B cell (primary cell): ENCODE measurements at regions of chr10 and their contacts with region 1.

Region 1: GRCh38 chr10:60878224-60878623 is 65.8 kb downstream of the RHOBTB1 start:
- DNase-seq: no peak
- ATAC-seq: no peak
- H3K4me3 ChIP-seq: no peak overlapping the region
- H3K4me3 Mint-ChIP-seq: no peak overlapping the region
- H3K27ac ChIP-seq: no peak overlapping the region
- H3K27ac Mint-ChIP-seq: no peak overlapping the region
- H3K4me1 ChIP-seq: no peaks in the 10 kb centered on the region
- H3K4me1 Mint-ChIP-seq: no peaks in the 10 kb centered on the region
- H3K27me3 ChIP-seq: no peaks in the 10 kb centered on the region
- H3K27me3 Mint-ChIP-seq: peaks cover 3% of the 10 kb centered on the region
- CTCF ChIP-seq: no peak

Region 2: DNA sequence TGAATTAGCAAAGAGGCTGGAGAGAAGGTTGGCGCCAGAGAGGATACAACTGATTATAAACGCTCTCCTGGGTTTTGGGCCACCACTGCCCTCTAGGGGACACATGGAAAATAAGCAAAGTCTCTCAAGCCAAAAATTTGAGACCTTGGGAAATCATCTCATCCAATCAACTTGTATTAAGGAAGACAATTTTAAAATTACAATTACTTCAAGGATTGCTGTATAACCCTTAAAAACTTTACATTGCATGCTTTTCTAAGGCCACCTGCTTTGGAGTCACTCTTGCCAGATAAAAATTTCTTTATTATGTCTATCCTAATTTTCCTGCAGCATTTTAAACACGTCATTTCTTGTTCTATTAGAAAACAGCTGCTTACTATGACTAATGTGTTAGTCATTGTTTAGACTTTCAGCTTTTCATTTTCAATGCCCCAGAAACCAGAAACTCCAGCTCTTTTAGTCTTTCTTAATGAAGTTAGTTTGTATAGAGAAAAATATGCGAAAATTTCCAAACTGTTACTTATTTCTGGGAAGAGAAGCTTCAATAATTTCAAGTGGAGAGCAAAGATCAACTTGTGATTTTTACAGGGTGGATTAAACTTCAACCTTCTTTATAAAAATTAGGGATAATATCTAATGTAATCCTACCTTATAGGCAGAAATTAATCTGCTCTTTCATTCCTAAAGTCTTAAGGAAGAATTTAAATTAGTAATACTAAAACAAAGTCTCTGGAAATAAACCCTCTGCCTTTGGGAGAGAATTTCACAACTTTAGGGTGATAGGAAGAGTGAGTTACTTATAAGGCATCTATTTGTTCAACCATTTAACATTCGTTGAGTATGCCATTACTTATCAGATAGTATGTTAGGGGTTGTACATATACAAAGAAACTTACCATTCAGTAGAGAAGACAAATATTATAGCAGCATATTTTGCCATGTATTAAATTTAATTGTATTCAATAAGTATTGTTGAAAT is 86.3 kb after region 1 on chr10:
- CTCF ChIA-PET with region 1: interaction called, 3 read pairs
- POLR2A ChIA-PET with region 1: no interaction called
- intact Hi-C with region 1: loop called (anchors 5 kb)
- DNase-seq: peak; percentile 67
- ATAC-seq: peak; percentile 58
- H3K4me3 ChIP-seq: no peak overlapping the region
- H3K4me3 Mint-ChIP-seq: no peak overlapping the region
- H3K27ac ChIP-seq: no peak overlapping the region
- H3K27ac Mint-ChIP-seq: no peak overlapping the region
- H3K4me1 ChIP-seq: peaks cover 12 to 13% of the 10 kb centered on the region in 2 donors
- H3K4me1 Mint-ChIP-seq: peaks cover 20% of the 10 kb centered on the region
- H3K27me3 ChIP-seq: no peaks in the 10 kb centered on the region
- H3K27me3 Mint-ChIP-seq: peaks cover 5% of the 10 kb centered on the region
- CTCF ChIP-seq: peak; percentile 93

Region 3: DNA sequence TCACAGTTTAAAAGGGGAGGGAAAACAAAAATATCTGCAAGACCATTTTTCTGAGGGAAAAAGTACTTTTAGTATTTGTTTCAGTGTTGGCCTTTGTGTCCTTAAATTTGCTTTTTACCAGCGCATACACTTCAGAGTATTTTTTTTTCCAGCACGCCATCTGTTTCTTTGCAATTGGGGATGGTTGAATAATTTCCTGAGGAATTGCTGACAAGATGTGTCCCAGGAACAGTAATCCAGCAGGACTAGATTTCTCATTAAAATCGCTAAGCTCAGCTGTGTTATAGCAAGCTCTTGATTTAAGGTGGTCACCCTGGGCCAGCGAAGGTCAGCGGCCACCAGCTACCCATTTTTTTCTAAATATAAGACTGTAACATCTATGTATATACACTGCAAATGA is 222.7 kb after region 1 on chr10:
- CTCF ChIA-PET with region 1: no interaction called
- POLR2A ChIA-PET with region 1: no interaction called
- intact Hi-C with region 1: no loop called
- DNase-seq: no peak
- ATAC-seq: no peak
- H3K4me3 ChIP-seq: no peak overlapping the region
- H3K4me3 Mint-ChIP-seq: no peak overlapping the region
- H3K27ac ChIP-seq: no peak overlapping the region
- H3K27ac Mint-ChIP-seq: no peak overlapping the region
- H3K4me1 ChIP-seq: no peaks in the 10 kb centered on the region
- H3K4me1 Mint-ChIP-seq: no peaks in the 10 kb centered on the region
- H3K27me3 ChIP-seq: no peaks in the 10 kb centered on the region
- H3K27me3 Mint-ChIP-seq: peaks cover 21% of the 10 kb centered on the region
- CTCF ChIP-seq: no peak